ENCODE measurements at regions of chr9 and their contacts with region 1.

Region 1: DNA sequence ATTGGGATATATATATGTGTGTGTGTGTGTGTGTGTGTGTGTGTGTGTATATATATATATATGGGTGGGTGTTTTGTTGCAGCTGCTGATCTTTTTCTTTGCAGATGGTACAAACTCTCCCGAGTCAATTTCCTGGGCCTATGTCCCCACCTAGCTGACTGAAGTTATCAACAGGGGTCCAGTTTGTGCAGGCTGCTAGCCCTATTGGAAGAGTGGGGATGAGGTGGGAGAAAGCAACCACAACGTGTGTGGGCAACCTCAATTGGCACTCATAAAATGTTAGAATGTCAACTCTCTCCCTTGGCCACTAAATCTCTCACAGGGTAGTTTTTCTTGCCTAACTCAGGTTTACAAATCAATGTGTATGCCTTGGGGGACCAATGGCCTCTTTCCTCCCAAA is 5.6 kb downstream of the NR4A3 start:
- DNase-seq: no peak
- ATAC-seq: no peak
- H3K4me3 ChIP-seq: no peak overlapping the region
- H3K27ac ChIP-seq: no peak overlapping the region
- H3K4me1 ChIP-seq: peaks cover 6% of the 10 kb centered on the region
- H3K27me3 ChIP-seq: peaks cover 0 to 7% (median 2%) of the 10 kb centered on the region in 3 donors
- CTCF ChIP-seq: no peak

Region 2: GRCh38 chr9:99906403-99907207 is 79.4 kb after region 1 on chr9 and contains the start of gene STX17:
- intact Hi-C with region 1: loop called (anchors 1 to 10 kb)
- DNase-seq: peak; percentile 81 to 89
- ATAC-seq: peak; percentile 94 to 97 (median 96)
- H3K4me3 ChIP-seq: peak within 1 kb of the TSS; percentile 99
- H3K27ac ChIP-seq: peak within 1 kb of the TSS; percentile 99
- H3K4me1 ChIP-seq: peaks cover 22% of the 10 kb centered on the region
- H3K27me3 ChIP-seq: no peaks in the 10 kb centered on the region
- CTCF ChIP-seq: peak; percentile 11
- total RNA-seq, gene STX17: 19.6 to 31.1 (median 28.5) TPM

Measured in psoas muscle (tissue), 8 donors.